ENCODE measurements at regions of chr15 and their contacts with region 1.

Region 1: DNA sequence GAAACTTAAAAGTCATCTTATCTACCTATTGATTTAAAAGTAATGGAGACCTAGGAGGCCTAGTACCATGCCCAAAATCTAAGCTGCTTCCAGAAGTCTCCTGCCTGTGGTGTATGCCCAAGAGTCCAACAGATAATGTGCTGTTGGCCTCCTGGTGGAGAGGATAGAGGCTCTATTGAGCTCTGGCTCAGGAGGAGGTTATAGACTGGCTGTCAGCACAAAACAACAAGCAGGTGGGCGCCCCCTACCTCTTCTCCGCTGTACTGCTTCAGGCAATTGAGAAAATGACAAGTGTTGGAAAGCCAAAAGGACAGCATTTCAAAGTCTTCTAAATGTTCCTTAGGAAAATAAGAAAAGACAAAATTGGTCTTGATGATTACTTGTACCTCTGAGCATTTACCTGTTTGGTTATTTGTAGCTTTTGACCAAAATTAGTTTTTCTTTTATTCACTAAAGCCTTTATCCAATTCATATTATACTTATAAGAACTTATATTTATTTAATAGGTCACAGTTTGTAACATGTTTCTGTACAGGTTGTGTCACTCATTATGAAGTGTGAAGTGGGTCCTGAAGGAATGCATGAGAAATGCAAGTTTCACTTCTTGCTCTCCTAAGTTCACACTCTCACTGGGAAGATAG is 17.2 kb upstream of the GNB5 start:
- DNase-seq: peak; percentile 58 to 82 (median 72)
- ATAC-seq: peak; percentile 100
- H3K4me3 ChIP-seq: no peak overlapping the region
- H3K4me3 Mint-ChIP-seq: no peak overlapping the region
- H3K27ac ChIP-seq: no peak overlapping the region
- H3K27ac Mint-ChIP-seq: no peak overlapping the region
- H3K4me1 ChIP-seq: no peaks in the 10 kb centered on the region
- H3K4me1 Mint-ChIP-seq: no peaks in the 10 kb centered on the region
- H3K27me3 ChIP-seq: no peaks in the 10 kb centered on the region
- H3K27me3 Mint-ChIP-seq: no peaks in the 10 kb centered on the region
- CTCF ChIP-seq: peak; percentile 84

Region 2: DNA sequence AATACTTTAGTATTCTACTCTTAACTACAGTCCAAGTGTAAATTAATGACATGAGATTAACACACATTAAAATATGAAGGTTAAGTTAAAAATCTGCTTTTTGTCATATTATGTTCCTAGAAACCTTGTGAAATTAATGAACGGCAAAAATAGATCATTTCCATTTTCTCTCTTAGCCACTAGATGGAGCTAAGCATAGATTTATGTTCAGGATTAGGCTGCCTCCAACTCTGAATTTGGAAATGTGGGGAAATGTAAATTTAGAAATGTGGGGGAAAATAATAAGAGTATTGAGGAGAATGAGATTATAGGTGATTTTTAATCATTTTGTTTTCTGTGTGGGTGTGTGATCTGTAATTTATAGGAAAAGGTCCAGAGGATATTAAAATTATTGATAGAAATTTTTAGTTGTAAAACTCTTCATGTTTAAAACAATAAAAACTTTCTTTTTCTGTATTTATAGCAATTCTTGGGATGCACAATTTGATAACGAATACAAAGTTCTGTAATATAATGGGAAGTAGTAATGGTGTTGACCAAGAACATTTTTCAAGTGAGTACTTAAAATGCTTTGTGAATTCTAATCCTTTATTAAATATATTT is 319.7 kb before region 1 on chr15:
- CTCF ChIA-PET with region 1: no interaction called
- POLR2A ChIA-PET with region 1: no interaction called
- intact Hi-C with region 1: loop called in 1 of 2 experiments (anchors 5 kb)
- DNase-seq: peak in 3 of 14 experiments; percentile 27 to 38 (median 33)
- ATAC-seq: peak; percentile 39
- H3K4me3 ChIP-seq: no peak overlapping the region
- H3K4me3 Mint-ChIP-seq: no peak overlapping the region
- H3K27ac ChIP-seq: no peak overlapping the region
- H3K27ac Mint-ChIP-seq: no peak overlapping the region
- H3K4me1 ChIP-seq: peaks cover 3% of the 10 kb centered on the region
- H3K4me1 Mint-ChIP-seq: peaks cover 5% of the 10 kb centered on the region
- H3K27me3 ChIP-seq: no peaks in the 10 kb centered on the region
- H3K27me3 Mint-ChIP-seq: no peaks in the 10 kb centered on the region
- CTCF ChIP-seq: peak; percentile 94

Region 3: GRCh38 chr15:52163321-52164190 is 44.9 kb before region 1 on chr15:
- CTCF ChIA-PET with region 1: interaction called, 8 read pairs
- POLR2A ChIA-PET with region 1: no interaction called
- intact Hi-C with region 1: loop called in 1 of 2 experiments (anchors 1 kb)
- DNase-seq: peak in 4 of 14 experiments; percentile 8 to 42 (median 38)
- ATAC-seq: peak; percentile 30
- H3K4me3 ChIP-seq: no peak overlapping the region
- H3K4me3 Mint-ChIP-seq: no peak overlapping the region
- H3K27ac ChIP-seq: no peak overlapping the region
- H3K27ac Mint-ChIP-seq: no peak overlapping the region
- H3K4me1 ChIP-seq: peaks cover 2% of the 10 kb centered on the region
- H3K4me1 Mint-ChIP-seq: peaks cover 38% of the 10 kb centered on the region
- H3K27me3 ChIP-seq: no peaks in the 10 kb centered on the region
- H3K27me3 Mint-ChIP-seq: no peaks in the 10 kb centered on the region
- CTCF ChIP-seq: peak; percentile 19

Region 4: DNA sequence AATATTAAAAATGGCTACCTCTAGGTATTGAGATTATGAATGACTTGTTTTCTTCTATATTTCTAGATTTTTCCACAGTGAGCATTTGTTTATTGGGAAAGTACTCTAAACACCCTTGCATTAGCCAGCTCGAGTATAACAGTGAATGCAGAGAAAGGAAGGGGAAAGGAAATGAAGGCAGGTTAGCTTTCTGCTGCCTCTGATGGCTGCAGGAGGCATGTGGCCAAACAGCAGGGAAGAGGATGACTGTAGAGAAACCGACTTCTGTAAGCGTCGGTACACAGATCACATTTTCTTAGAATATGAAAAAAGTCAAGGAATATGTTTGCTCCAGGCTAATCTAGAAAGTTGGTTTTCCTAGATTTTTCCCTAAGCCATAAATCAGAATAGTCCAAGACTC is 37.0 kb before region 1 on chr15:
- CTCF ChIA-PET with region 1: interaction called, 8 read pairs
- POLR2A ChIA-PET with region 1: interaction called, 4 read pairs
- intact Hi-C with region 1: loop called in 1 of 2 experiments (anchors 5 kb)
- DNase-seq: peak in 4 of 14 experiments; percentile 32 to 43 (median 38)
- ATAC-seq: peak; percentile 82
- H3K4me3 ChIP-seq: no peak overlapping the region
- H3K4me3 Mint-ChIP-seq: peak overlapping the region; percentile 16
- H3K27ac ChIP-seq: no peak overlapping the region
- H3K27ac Mint-ChIP-seq: no peak overlapping the region
- H3K4me1 ChIP-seq: peaks cover 14% of the 10 kb centered on the region
- H3K4me1 Mint-ChIP-seq: peaks cover 71% of the 10 kb centered on the region
- H3K27me3 ChIP-seq: no peaks in the 10 kb centered on the region
- H3K27me3 Mint-ChIP-seq: no peaks in the 10 kb centered on the region
- CTCF ChIP-seq: peak; percentile 6

Measured in CD4-positive, alpha-beta T cell (primary cell).